CD8-positive, alpha-beta T cell (primary cell): ENCODE measurements at regions of chr4 and their contacts with region 1.

Region 1: GRCh38 chr4:78092850-78093249 is 35.7 kb downstream of the FRAS1 start:
- DNase-seq: no peak
- ATAC-seq: no peak
- H3K4me3 ChIP-seq: no peak overlapping the region
- H3K4me3 Mint-ChIP-seq: no peak overlapping the region
- H3K27ac ChIP-seq: no peak overlapping the region
- H3K27ac Mint-ChIP-seq: no peak overlapping the region
- H3K4me1 ChIP-seq: no peaks in the 10 kb centered on the region
- H3K4me1 Mint-ChIP-seq: no peaks in the 10 kb centered on the region
- H3K27me3 ChIP-seq: no peaks in the 10 kb centered on the region
- H3K27me3 Mint-ChIP-seq: peaks cover 4% of the 10 kb centered on the region
- CTCF ChIP-seq: no peak

Region 2: DNA sequence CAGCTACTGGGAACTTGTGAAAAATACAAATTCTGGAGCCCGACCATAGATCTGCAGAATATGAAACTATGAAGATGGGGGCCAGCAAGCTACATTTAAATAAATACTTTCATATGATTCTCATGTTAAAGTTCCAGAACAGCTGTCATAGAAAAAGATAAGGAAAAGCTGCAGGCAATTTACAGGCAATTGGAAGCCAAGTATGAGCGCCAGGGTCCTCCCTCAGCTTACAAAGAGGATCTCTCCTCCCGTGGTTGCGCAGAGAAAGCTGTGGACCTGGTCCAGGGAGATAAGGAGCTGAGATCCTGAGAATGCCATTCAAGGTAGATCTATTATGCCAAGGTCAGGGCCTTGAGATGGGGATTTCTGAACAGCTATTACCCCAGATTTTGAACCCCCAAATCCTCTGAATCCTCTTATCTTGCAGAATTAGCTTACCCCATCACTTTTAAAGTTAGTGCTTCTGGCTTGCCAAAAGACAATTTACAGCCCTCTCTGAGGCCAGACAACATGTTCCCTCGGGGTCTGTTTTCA is 61.4 kb before region 1 on chr4:
- CTCF ChIA-PET with region 1: no interaction called
- POLR2A ChIA-PET with region 1: no interaction called
- intact Hi-C with region 1: loop called in 1 of 2 experiments (anchors 2 kb)
- DNase-seq: no peak
- ATAC-seq: no peak
- H3K4me3 ChIP-seq: no peak overlapping the region
- H3K4me3 Mint-ChIP-seq: no peak overlapping the region
- H3K27ac ChIP-seq: no peak overlapping the region
- H3K27ac Mint-ChIP-seq: no peak overlapping the region
- H3K4me1 ChIP-seq: no peaks in the 10 kb centered on the region
- H3K4me1 Mint-ChIP-seq: no peaks in the 10 kb centered on the region
- H3K27me3 ChIP-seq: no peaks in the 10 kb centered on the region
- H3K27me3 Mint-ChIP-seq: peaks cover 14% of the 10 kb centered on the region
- CTCF ChIP-seq: no peak

Region 3: GRCh38 chr4:78512357-78512920 is 419.6 kb after region 1 on chr4:
- CTCF ChIA-PET with region 1: no interaction called
- POLR2A ChIA-PET with region 1: no interaction called
- intact Hi-C with region 1: no loop called
- DNase-seq: no peak
- ATAC-seq: no peak
- H3K4me3 ChIP-seq: no peak overlapping the region
- H3K4me3 Mint-ChIP-seq: no peak overlapping the region
- H3K27ac ChIP-seq: no peak overlapping the region
- H3K27ac Mint-ChIP-seq: no peak overlapping the region
- H3K4me1 ChIP-seq: no peaks in the 10 kb centered on the region
- H3K4me1 Mint-ChIP-seq: no peaks in the 10 kb centered on the region
- H3K27me3 ChIP-seq: no peaks in the 10 kb centered on the region
- H3K27me3 Mint-ChIP-seq: no peaks in the 10 kb centered on the region
- CTCF ChIP-seq: no peak

Region 4: GRCh38 chr4:78775303-78776030 is 682.6 kb after region 1 on chr4:
- CTCF ChIA-PET with region 1: no interaction called
- POLR2A ChIA-PET with region 1: no interaction called
- intact Hi-C with region 1: no loop called
- DNase-seq: peak; percentile 75 to 93 (median 86)
- ATAC-seq: peak; percentile 57
- H3K4me3 ChIP-seq: peak overlapping the region; percentile 87
- H3K4me3 Mint-ChIP-seq: peak overlapping the region; percentile 92
- H3K27ac ChIP-seq: peak overlapping the region; percentile 82 to 87
- H3K27ac Mint-ChIP-seq: peak overlapping the region; percentile 94
- H3K4me1 ChIP-seq: peaks cover 17% of the 10 kb centered on the region
- H3K4me1 Mint-ChIP-seq: peaks cover 16% of the 10 kb centered on the region
- H3K27me3 ChIP-seq: no peaks in the 10 kb centered on the region
- H3K27me3 Mint-ChIP-seq: no peaks in the 10 kb centered on the region
- CTCF ChIP-seq: no peak